Adrenal gland (tissue), 19 donors: ENCODE measurements at regions of chr1 and their contacts with region 1.

Region 1: DNA sequence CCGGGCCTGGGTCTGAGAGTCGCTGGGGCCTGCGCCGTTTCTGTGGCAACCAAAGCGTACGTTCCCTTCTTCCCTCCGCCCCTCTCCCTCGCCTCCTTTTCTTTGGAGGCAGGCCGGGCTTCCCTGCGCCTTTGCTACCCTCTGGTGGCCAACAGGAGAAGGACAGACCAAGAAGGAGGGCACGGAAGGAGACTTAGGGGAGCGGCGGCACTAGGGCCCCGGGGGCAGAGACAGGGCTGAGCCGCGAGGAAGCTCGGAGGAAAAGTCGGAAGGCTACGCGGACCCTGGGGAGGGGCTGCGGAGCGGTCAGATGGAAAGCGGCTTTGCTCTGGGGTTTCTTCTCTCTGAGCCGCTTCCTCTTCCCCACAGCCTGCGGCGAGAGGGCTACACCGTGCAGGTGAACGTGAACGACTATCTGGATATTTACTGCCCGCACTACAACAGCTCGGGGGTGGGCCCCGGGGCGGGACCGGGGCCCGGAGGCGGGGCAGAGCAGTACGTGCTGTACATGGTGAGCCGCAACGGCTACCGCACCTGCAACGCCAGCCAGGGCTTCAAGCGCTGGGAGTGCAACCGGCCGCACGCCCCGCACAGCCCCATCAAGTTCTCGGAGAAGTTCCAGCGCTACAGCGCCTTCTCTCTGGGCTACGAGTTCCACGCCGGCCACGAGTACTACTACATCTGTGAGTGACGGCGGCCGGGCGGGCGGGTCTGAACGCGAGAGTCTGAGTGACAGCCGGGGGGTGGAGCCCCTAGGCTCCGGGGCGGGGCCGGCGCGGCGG is 6.3 kb downstream of the EFNA3 start:
- DNase-seq: peak; percentile 92 to 96 (median 94)
- H3K4me3 ChIP-seq: peak overlapping the region in 3 of 4 donors; percentile 56 to 60 (median 59)
- H3K27ac ChIP-seq: peak overlapping the region; percentile 72 to 91 (median 81)
- H3K4me1 ChIP-seq: peaks cover 23 to 46% of the 10 kb centered on the region in 2 donors
- H3K27me3 ChIP-seq: peaks cover 42% of the 10 kb centered on the region
- CTCF ChIP-seq: peak; percentile 90 to 99 (median 98)
- POLR2A ChIP-seq: peak in 1 of 2 donors; percentile 52

Region 2: GRCh38 chr1:155044812-155045690 is 39.9 kb before region 1 on chr1:
- intact Hi-C with region 1: loop called in 1 of 2 experiments (anchors 5 kb)
- DNase-seq: peak; percentile 85 to 96 (median 91)
- H3K4me3 ChIP-seq: no peak overlapping the region
- H3K27ac ChIP-seq: peak overlapping the region in 3 of 5 donors; percentile 7 to 43 (median 43)
- H3K4me1 ChIP-seq: peaks cover 6 to 16% of the 10 kb centered on the region in 2 donors
- H3K27me3 ChIP-seq: no peaks in the 10 kb centered on the region
- CTCF ChIP-seq: peak; percentile 65 to 85 (median 78)
- POLR2A ChIP-seq: no peak

Region 3: DNA sequence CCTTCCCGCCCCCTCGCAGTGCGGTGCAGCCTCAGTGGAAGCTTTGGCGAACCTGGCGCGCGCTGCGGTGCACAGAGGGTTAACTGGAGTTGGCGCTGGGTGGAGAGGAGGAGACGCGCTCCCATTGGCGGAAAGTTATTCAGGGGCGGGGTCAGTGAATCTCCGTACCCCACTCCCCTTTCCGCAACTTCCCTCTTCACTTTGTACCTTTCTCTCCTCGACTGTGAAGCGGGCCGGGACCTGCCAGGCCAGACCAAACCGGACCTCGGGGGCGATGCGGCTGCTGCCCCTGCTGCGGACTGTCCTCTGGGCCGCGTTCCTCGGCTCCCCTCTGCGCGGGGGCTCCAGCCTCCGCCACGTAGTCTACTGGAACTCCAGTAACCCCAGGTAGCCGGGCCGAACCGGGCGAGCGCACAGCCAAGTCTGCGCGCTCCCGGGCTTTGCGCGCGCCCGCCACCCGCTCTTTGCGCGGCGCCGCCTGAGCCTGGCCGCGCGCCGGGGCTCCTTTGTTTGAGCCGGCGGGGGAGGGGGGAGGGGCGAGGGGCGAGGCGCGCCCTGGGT is 21.3 kb before region 1 on chr1 and contains the start of gene EFNA4:
- intact Hi-C with region 1: loop called in 1 of 2 experiments (anchors 2 kb)
- DNase-seq: peak; percentile 85 to 91 (median 89)
- H3K4me3 ChIP-seq: peak within 1 kb of the TSS; percentile 60 to 89 (median 68)
- H3K27ac ChIP-seq: peak within 1 kb of the TSS; percentile 20 to 94 (median 78)
- H3K4me1 ChIP-seq: peaks cover 11 to 36% of the 10 kb centered on the region in 2 donors
- H3K27me3 ChIP-seq: no peaks in the 10 kb centered on the region
- CTCF ChIP-seq: no peak
- POLR2A ChIP-seq: peak; percentile 32 to 69
- total RNA-seq, gene EFNA4: 3.5 to 28.7 (median 12.7) TPM